ENCODE measurements at regions of chr4 and their contacts with region 1.

Region 1: GRCh38 chr4:184263910-184264732 is 46.4 kb upstream of the ENPP6 start:
- DNase-seq: peak; percentile 85 to 92 (median 88)
- H3K4me3 ChIP-seq: no peak overlapping the region
- H3K4me3 Mint-ChIP-seq: peak overlapping the region in 5 of 8 donors; percentile 0 to 55 (median 38)
- H3K27ac ChIP-seq: no peak overlapping the region
- H3K27ac Mint-ChIP-seq: peak overlapping the region; percentile 3 to 75 (median 31)
- H3K4me1 ChIP-seq: peaks cover 28% of the 10 kb centered on the region
- H3K4me1 Mint-ChIP-seq: peaks cover 24 to 41% (median 35%) of the 10 kb centered on the region in 4 donors
- H3K27me3 ChIP-seq: no peaks in the 10 kb centered on the region
- H3K27me3 Mint-ChIP-seq: peaks cover 0 to 2% of the 10 kb centered on the region in 2 donors

Region 2: DNA sequence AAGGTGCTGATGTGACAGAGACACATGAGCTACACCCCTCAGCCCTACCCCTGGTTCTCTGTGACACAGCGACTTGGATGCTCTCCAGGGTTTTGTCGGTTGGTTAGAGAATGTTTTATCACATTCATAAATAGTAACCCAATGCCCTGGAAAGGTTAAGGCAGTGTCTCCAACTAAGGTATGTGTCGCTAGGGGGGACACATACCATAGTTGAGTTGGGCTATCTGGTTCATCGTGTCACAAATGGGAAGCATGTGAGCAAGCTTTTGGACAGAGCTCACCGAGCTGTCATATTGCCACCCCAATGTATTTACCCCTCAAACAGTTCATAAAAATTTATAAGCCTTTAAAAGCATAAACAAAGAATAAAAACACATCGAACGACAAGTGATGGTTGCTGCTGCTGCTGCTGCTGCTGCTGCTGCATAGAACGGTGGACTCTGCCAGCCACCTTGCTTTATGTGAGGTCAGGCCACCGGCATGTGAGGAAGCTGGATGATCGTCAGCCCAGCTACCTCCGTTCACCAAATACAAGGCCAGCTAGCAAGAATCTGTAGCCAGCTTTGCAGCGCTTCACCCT is 303.1 kb before region 1 on chr4:
- CTCF ChIA-PET with region 1: no interaction called
- POLR2A ChIA-PET with region 1: no interaction called
- intact Hi-C with region 1: no loop called
- DNase-seq: no peak
- H3K4me3 ChIP-seq: no peak overlapping the region
- H3K4me3 Mint-ChIP-seq: no peak overlapping the region
- H3K27ac ChIP-seq: no peak overlapping the region
- H3K27ac Mint-ChIP-seq: no peak overlapping the region
- H3K4me1 ChIP-seq: no peaks in the 10 kb centered on the region
- H3K4me1 Mint-ChIP-seq: no peaks in the 10 kb centered on the region
- H3K27me3 ChIP-seq: no peaks in the 10 kb centered on the region
- H3K27me3 Mint-ChIP-seq: peaks cover 9% of the 10 kb centered on the region in 2 donors

Region 3: GRCh38 chr4:184250795-184251669 is 13.1 kb before region 1 on chr4:
- CTCF ChIA-PET with region 1: interaction called, 20 read pairs
- POLR2A ChIA-PET with region 1: interaction called, 3 read pairs
- intact Hi-C with region 1: no loop called
- DNase-seq: peak in 4 of 5 donors; percentile 59 to 65 (median 61)
- H3K4me3 ChIP-seq: no peak overlapping the region
- H3K4me3 Mint-ChIP-seq: no peak overlapping the region
- H3K27ac ChIP-seq: no peak overlapping the region
- H3K27ac Mint-ChIP-seq: peak overlapping the region in 3 of 7 donors; percentile 2 to 26 (median 15)
- H3K4me1 ChIP-seq: no peaks in the 10 kb centered on the region
- H3K4me1 Mint-ChIP-seq: peaks cover 0 to 6% (median 3%) of the 10 kb centered on the region in 4 donors
- H3K27me3 ChIP-seq: no peaks in the 10 kb centered on the region
- H3K27me3 Mint-ChIP-seq: peaks cover 0 to 2% of the 10 kb centered on the region in 2 donors

Region 4: DNA sequence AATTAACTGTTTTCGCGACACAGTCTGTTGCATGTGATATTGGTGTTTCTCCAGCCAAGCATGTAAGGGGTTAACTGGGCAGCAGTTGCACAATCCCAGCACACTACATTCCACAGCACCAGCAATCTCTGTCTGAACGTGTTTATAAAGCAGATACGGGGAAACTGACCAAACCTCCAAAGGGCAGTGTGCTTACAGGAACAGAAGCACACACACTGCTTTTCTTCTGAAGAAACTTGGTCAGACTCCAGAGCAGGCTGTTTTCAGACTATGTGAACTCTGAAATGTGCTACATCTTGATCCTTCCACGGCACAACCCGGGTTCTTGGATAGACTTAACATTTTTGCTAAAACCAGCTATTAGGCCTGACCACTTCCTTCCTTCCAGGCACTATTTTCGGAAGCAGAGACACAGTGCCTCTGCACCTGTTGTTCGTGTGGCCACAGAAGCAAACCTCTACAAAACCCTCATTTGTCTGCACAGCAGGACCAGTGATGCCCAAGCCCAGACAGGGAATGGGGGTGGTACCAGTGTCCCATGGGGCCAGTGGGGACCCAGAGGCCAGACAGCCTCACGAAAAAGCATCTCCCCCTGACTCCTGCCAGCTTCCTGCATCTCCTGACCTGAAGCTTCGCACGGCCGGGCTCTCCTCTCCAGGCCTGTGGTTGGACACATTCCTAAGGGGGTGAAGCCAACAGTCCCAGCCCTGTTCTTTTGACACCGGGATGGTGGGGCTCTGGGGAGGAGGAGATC is 120.1 kb after region 1 on chr4:
- CTCF ChIA-PET with region 1: interaction called, 9 read pairs
- POLR2A ChIA-PET with region 1: interaction called, 3 read pairs
- intact Hi-C with region 1: loop called (anchors 10 kb)
- DNase-seq: peak in 3 of 5 donors; percentile 5 to 11 (median 9)
- H3K4me3 ChIP-seq: peak overlapping the region in 1 of 2 donors; percentile 31
- H3K4me3 Mint-ChIP-seq: peak overlapping the region; percentile 17 to 78 (median 60)
- H3K27ac ChIP-seq: no peak overlapping the region
- H3K27ac Mint-ChIP-seq: peak overlapping the region in 6 of 7 donors; percentile 7 to 73 (median 48)
- H3K4me1 ChIP-seq: peaks cover 53% of the 10 kb centered on the region
- H3K4me1 Mint-ChIP-seq: peaks cover 24 to 65% (median 49%) of the 10 kb centered on the region in 4 donors
- H3K27me3 ChIP-seq: no peaks in the 10 kb centered on the region
- H3K27me3 Mint-ChIP-seq: no peaks in the 10 kb centered on the region

Region 5: GRCh38 chr4:184538023-184538599 is 274.0 kb after region 1 on chr4:
- CTCF ChIA-PET with region 1: interaction called, 82 read pairs
- POLR2A ChIA-PET with region 1: interaction called, 119 read pairs
- intact Hi-C with region 1: loop called (anchors 1 kb)
- DNase-seq: peak; percentile 59 to 71 (median 65)
- H3K4me3 ChIP-seq: peak overlapping the region; percentile 82 to 92
- H3K4me3 Mint-ChIP-seq: peak overlapping the region; percentile 91 to 98 (median 94)
- H3K27ac ChIP-seq: peak overlapping the region; percentile 98
- H3K27ac Mint-ChIP-seq: peak overlapping the region; percentile 94 to 100 (median 99)
- H3K4me1 ChIP-seq: peaks cover 37% of the 10 kb centered on the region
- H3K4me1 Mint-ChIP-seq: peaks cover 28 to 51% (median 35%) of the 10 kb centered on the region in 4 donors
- H3K27me3 ChIP-seq: no peaks in the 10 kb centered on the region
- H3K27me3 Mint-ChIP-seq: no peaks in the 10 kb centered on the region

Region 6: DNA sequence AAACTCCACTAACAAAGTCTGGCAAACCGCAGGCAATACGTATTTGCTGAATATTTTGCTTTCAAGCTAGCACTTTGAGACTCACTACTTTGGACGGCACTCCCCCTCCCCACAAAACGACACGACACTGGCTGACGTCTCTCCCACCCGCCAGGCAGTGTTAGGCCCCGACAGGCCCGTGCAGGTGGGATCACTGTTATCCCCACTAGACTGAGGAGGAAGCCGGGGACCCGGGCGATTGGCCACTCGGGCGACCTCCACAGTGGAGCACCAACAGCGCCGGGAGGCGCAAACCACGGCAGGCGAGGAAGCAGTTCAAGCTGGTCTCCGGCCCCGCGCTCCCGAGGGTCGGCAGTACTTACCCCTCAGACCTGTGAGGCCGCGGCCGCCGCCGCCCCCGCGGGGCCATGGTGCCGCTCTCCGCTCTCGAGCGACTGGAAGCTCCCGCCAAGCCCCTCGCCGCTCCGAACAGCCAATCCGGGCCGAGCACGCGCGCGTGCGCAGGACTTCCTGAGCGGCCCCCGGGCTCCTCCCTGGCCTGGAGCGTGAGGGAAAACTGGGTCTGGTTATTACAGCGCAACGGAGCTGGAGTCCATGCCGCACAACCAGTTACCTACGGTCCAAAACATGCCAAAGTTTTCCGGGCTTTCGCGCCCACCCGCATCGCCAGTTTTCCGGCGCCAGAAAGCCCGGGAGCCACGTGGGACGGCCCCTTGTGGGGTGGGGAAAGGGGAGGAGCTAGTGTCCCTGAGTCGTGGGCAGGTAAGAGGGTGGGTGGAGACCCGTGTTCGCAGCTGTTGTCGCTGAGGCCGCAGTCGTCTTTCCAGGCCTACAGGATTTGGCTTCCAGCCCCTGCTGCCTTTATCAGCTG is 469.8 kb after region 1 on chr4 and contains the start of gene CENPU:
- CTCF ChIA-PET with region 1: interaction called, 8 read pairs
- POLR2A ChIA-PET with region 1: interaction called, 20 read pairs
- intact Hi-C with region 1: loop called (anchors 1 kb)
- DNase-seq: peak; percentile 93 to 95 (median 94)
- H3K4me3 ChIP-seq: peak within 1 kb of the TSS; percentile 59 to 81
- H3K4me3 Mint-ChIP-seq: peak within 1 kb of the TSS; percentile 88 to 96 (median 92)
- H3K27ac ChIP-seq: peak within 1 kb of the TSS; percentile 56
- H3K27ac Mint-ChIP-seq: peak within 1 kb of the TSS; percentile 86 to 95 (median 92)
- H3K4me1 ChIP-seq: peaks cover 15% of the 10 kb centered on the region
- H3K4me1 Mint-ChIP-seq: peaks cover 8 to 23% (median 14%) of the 10 kb centered on the region in 4 donors
- H3K27me3 ChIP-seq: no peaks in the 10 kb centered on the region
- H3K27me3 Mint-ChIP-seq: no peaks in the 10 kb centered on the region
- total RNA-seq, gene CENPU: 2.1 to 2.2 TPM

Region 7: GRCh38 chr4:184983672-184984356 is 719.7 kb after region 1 on chr4:
- CTCF ChIA-PET with region 1: interaction called, 10 read pairs
- POLR2A ChIA-PET with region 1: no interaction called
- intact Hi-C with region 1: loop called (anchors 5 kb)
- DNase-seq: peak in 4 of 5 donors; percentile 28 to 36 (median 30)
- H3K4me3 ChIP-seq: peak overlapping the region in 1 of 2 donors; percentile 29
- H3K4me3 Mint-ChIP-seq: no peak overlapping the region
- H3K27ac ChIP-seq: no peak overlapping the region
- H3K27ac Mint-ChIP-seq: no peak overlapping the region
- H3K4me1 ChIP-seq: peaks cover 20% of the 10 kb centered on the region
- H3K4me1 Mint-ChIP-seq: peaks cover 0 to 9% (median 0%) of the 10 kb centered on the region in 4 donors
- H3K27me3 ChIP-seq: no peaks in the 10 kb centered on the region
- H3K27me3 Mint-ChIP-seq: peaks cover 0 to 8% of the 10 kb centered on the region in 2 donors